Activated CD4-positive, alpha-beta T cell treated with anti-CD3 and anti-CD28 coated beads, Interleukin-2, amount 10 ng/mL, durations not matched to agents 24 days and 14 days (primary cell): ENCODE measurements at regions of chr12 and their contacts with region 1.

Region 1: DNA sequence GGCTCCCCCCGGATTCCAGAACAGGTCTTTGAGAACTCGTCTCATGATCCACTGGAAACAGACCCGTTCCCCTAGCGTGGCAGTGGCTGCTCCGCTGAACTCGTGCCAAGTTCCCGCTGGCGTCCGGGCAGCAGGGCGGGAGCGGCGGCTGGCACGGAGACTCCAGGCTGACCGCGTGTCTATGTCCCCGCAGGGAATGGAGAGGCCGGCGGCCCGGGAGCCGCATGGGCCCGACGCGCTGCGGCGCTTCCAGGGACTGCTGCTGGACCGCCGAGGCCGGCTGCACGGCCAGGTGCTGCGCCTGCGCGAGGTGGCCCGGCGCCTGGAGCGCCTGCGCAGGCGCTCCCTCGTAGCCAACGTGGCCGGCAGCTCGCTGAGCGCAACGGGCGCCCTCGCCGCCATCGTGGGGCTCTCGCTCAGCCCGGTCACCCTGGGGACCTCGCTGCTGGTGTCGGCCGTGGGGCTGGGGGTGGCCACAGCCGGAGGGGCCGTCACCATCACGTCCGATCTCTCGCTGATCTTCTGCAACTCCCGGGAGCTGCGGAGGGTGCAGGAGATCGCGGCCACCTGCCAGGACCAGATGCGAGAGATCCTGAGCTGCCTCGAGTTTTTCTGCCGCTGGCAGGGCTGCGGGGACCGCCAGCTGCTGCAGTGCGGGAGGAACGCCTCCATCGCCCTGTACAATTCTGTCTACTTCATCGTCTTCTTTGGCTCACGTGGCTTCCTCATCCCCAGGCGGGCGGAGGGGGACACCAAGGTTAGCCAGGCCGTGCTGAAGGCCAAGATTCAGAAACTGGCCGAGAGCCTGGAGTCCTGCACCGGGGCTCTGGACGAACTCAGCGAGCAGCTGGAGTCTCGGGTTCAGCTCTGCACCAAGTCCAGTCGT is 1.5 kb downstream of the APOLD1 start:
- DNase-seq: peak; percentile 93
- H3K4me3 Mint-ChIP-seq: peak overlapping the region; percentile 89
- H3K27ac Mint-ChIP-seq: peak overlapping the region; percentile 94
- H3K4me1 Mint-ChIP-seq: peaks cover 33% of the 10 kb centered on the region
- H3K27me3 Mint-ChIP-seq: no peaks in the 10 kb centered on the region

Region 2: GRCh38 chr12:12803186-12803585 is 16.2 kb after region 1 on chr12:
- intact Hi-C with region 1: loop called (anchors 1 kb)
- DNase-seq: peak; percentile 86
- H3K4me3 Mint-ChIP-seq: peak overlapping the region; percentile 56
- H3K27ac Mint-ChIP-seq: peak overlapping the region; percentile 60
- H3K4me1 Mint-ChIP-seq: peaks cover 49% of the 10 kb centered on the region
- H3K27me3 Mint-ChIP-seq: no peaks in the 10 kb centered on the region

Region 3: DNA sequence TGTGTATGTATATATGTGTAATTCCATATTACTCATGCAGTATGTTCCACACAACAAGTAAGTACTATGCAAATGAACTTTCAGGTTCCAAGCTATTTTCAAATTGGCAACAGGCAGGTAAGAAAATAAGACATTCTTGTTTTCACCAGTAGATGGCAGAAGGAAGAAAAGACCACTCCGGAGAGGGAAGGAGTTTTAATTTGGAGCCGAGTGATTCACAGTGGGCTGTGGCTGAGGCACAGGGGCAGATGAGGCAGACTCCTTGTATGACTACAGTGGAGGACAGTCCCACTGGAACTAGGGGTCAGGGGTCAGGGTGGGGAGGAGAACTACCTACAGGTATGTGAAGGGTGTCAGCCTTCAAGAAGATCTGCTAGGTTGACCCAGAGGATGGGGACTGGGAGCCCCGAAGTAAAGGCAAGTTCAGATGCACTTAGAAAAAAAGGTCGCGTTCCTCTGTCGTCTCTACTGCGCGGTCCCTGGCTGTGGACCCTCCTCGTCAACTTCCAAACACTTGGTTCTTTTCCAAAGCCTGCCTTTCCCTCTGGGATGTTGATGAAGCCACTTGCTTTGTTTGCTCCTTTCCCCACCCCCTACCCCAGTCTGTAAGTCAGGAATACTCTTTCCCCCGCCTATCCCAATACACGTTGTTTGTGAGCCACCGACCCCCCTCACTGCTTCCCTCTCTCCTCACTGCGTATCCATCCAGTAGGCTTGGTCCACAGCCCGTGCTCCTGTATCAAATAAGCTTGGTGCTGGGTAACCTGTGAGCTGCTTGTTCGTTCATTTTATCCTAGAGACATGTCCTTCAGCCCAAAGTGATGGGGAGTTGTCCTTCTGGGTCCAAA is 50.3 kb after region 1 on chr12:
- intact Hi-C with region 1: loop called (anchors 2 kb)
- DNase-seq: peak; percentile 75
- H3K4me3 Mint-ChIP-seq: no peak overlapping the region
- H3K27ac Mint-ChIP-seq: peak overlapping the region; percentile 77
- H3K4me1 Mint-ChIP-seq: peaks cover 32% of the 10 kb centered on the region
- H3K27me3 Mint-ChIP-seq: no peaks in the 10 kb centered on the region

Region 4: GRCh38 chr12:12916135-12916944 is 129.4 kb after region 1 on chr12:
- intact Hi-C with region 1: loop called (anchors 5 kb)
- DNase-seq: peak; percentile 96
- H3K4me3 Mint-ChIP-seq: no peak overlapping the region
- H3K27ac Mint-ChIP-seq: no peak overlapping the region
- H3K4me1 Mint-ChIP-seq: peaks cover 3% of the 10 kb centered on the region
- H3K27me3 Mint-ChIP-seq: peaks cover 10% of the 10 kb centered on the region

Region 5: DNA sequence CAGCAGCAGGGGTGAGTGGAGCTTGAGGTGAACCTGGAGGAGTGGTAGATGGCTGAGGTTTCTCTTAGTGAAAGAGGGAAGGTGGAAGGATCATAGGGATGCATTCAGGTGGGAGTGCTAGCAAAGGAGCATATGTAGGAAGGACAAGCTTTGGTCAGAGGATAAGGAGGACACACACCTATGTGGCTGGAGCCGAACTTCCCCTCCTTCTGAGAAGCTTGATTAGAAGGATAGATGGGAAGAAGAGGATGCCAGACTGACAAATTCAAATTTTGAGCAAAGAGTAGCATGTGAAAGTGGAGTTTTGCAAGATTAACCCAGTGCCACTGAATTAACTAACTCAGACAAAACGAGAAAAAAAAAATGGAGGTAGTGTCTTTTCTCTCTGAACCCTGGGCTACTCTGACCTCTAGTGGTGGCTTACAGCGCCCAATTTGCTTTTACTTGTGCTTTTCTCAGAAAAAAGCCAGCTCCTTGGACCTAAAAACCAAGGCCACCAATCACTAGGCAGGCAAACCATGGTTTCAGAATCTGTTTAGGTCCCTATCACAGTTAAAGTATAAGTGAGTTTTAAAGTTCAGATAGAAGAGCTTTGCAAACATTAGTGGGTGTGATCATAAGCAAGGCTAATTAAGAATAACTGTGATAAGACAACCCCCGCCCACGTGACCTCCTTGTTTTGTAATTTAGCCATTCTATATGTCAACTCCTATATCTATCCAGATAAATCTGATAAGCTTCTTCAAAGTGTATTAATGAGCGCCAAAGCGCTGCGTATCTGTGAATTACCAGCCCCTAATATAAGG is 425.1 kb after region 1 on chr12:
- intact Hi-C with region 1: loop called (anchors 5 kb)
- DNase-seq: peak; percentile 92
- H3K4me3 Mint-ChIP-seq: peak overlapping the region; percentile 4
- H3K27ac Mint-ChIP-seq: peak overlapping the region; percentile 54
- H3K4me1 Mint-ChIP-seq: peaks cover 34% of the 10 kb centered on the region
- H3K27me3 Mint-ChIP-seq: no peaks in the 10 kb centered on the region